AG04450 (cell line): ENCODE measurements at regions of chr6 and their contacts with region 1.

Region 1: DNA sequence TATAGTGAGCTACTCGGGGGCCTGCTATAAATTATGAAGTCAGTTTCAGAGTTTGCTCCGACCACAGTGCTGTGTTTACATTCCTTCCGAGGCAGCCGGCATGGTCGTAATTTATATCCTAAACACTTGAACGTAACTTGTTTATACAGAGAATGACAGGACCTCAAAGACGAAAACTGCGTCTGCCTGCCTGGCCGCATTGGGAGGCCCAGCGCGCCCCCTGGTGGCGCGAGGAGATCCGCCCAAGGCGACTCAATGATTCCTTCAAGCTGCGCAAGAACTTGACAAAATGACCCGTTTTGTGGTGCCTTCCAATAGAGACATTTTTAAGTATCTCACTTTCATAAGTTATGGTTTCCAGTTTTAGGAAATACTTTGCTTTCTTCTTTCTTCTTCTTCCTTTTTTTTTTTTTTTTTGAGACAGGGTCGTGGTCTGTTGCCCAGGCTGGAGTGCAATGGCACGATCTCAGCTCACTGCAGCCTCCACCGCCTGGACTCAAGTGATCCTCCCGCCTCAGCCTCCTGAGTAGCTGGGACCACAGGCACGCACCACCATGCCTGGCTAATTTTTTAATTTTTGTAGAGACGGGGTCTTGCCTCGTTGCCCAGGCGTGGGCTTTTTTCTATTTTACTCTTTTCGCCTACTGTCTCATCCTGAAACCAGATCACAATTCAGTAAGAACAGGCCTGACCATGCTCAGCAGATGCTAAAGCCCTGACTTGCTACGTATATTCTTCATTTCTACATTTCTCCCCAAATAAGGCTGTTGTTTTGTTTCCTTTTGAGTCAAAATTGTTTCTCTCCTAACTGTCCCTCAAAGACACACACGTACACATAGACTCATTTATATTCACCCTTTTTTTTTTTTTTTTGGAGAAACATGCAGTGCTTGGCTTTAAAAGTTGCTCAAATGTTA is 7.8 kb downstream of the FOXF2 start:
- DNase-seq: peak; percentile 94
- H3K4me3 ChIP-seq: no peak overlapping the region
- H3K27ac ChIP-seq: no peak overlapping the region
- H3K27me3 ChIP-seq: no peaks in the 10 kb centered on the region
- CTCF ChIP-seq: peak; percentile 99

Region 2: DNA sequence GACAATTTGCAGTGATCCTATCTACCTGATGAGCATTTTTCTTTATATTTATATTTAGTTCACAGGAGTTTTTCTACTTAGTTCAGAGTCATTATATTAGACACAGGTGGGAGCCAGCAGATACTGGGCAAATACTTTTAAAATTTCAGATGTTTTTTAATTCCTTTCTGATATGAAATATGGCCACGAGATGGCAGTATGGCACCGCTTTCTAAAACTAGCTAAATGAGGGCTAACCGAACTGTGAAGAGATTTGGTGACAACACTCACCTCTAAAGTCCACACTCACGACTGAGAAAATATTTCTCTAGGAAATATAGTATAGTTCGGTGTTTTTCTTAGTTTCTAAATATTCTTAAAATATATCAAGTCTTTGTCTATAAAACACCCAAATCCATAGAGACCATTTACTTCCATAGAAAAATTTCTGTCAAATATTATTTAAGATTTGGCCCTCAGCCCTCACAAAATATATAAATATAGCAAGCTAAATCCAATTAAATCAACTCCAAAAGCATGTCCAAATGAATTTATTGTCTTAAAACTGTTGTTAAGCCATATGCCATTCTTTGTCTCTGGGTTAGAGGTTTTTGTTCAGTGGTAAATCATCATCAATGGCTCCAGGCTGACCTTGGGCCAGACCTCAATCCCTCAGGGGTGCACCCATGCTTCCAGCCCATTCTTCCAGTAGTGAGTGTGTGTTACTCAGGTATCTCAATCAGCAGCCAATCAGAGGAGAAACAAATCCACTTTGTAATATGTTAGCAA is 803.9 kb before region 1 on chr6:
- CTCF ChIA-PET with region 1: interaction called, 10 read pairs
- POLR2A ChIA-PET with region 1: no interaction called
- DNase-seq: no peak
- H3K4me3 ChIP-seq: no peak overlapping the region
- H3K27ac ChIP-seq: no peak overlapping the region
- H3K27me3 ChIP-seq: no peaks in the 10 kb centered on the region
- CTCF ChIP-seq: peak; percentile 64

Region 3: GRCh38 chr6:797479-798077 is 599.6 kb before region 1 on chr6:
- CTCF ChIA-PET with region 1: interaction called, 26 read pairs
- POLR2A ChIA-PET with region 1: no interaction called
- DNase-seq: peak; percentile 21
- H3K4me3 ChIP-seq: no peak overlapping the region
- H3K27ac ChIP-seq: no peak overlapping the region
- H3K27me3 ChIP-seq: peaks cover 21% of the 10 kb centered on the region
- CTCF ChIP-seq: peak; percentile 80

Region 4: DNA sequence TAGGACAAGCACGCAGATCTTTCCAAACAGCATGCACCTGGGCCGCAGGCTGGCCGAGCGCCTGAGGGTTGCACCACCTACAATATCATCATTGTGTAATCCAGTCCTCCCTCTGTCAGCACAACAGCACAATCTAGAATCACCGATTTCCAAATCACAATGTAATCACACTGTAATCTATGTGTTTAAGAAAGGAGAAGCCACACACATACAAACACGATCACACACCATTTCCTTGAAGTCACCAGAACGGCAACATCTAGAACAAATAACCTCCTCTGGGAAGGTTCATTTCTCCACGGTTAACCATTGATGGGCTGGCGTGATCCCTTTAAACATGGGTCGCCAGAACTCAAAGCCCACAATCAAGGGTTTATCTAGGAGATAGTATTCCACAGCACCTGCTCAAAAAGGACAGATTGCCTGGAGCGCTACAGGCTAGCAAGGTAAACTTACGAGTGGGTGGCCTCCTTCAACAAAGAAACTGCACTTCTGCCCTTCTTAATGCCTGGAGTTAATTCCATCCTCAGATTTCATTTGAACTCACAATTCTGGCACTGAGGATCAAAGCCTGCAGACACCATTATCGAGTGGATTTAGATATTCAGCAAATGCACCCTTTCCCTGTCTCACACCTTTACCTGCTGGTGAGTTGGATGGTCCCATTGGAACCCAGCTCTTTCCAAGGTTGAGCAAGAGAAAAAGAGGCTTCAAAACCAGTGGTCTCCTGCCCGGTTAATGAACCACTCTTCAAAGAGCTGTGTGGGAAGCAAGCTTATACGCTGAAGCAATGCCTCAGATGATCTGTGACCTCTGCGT is 169.1 kb before region 1 on chr6:
- CTCF ChIA-PET with region 1: no interaction called
- POLR2A ChIA-PET with region 1: no interaction called
- DNase-seq: no peak
- H3K4me3 ChIP-seq: no peak overlapping the region
- H3K27ac ChIP-seq: no peak overlapping the region
- H3K27me3 ChIP-seq: peaks cover 13% of the 10 kb centered on the region
- CTCF ChIP-seq: no peak

Region 5: GRCh38 chr6:1381481-1382330 is 15.5 kb before region 1 on chr6:
- CTCF ChIA-PET with region 1: interaction called, 21 read pairs
- POLR2A ChIA-PET with region 1: interaction called, 4 read pairs
- DNase-seq: no peak
- H3K4me3 ChIP-seq: peak overlapping the region; percentile 50
- H3K27ac ChIP-seq: no peak overlapping the region
- H3K27me3 ChIP-seq: peaks cover 58% of the 10 kb centered on the region
- CTCF ChIP-seq: peak; percentile 66

Region 6: DNA sequence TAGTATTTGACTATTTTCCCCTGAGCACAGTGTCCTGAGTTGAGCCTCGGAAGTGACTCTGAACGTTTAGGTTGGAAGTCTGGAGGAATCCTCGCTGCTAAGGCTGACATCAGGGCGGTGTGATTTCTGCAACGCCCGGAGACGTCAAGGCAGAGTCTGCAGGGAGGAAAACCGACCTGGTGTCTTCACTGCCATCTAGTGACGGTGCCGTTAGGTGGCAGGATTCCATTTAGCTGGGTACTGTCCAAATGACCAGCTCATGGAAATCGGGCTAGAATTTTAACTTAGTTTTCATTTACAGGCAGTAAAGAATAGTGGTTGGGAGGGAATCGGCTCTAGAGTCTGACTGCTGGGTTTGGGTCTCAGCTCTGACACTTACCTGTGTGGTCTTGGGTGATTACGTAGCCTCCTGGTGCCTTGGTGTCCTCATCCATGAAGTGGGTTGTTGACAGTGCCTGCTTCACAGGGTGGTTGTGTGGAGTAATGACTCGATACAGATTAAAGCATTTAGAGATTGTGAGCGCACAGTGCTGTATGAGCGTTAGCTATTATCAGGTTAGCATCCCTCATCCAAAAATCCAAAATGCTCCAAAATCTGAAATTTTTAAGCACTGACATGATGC is 27.2 kb after region 1 on chr6:
- CTCF ChIA-PET with region 1: interaction called, 49 read pairs
- POLR2A ChIA-PET with region 1: interaction called, 3 read pairs
- DNase-seq: no peak
- H3K4me3 ChIP-seq: no peak overlapping the region
- H3K27ac ChIP-seq: no peak overlapping the region
- H3K27me3 ChIP-seq: peaks cover 12% of the 10 kb centered on the region
- CTCF ChIP-seq: peak; percentile 78